A673 (cell line): ENCODE measurements at regions of chr5 and their contacts with region 1.

Region 1: DNA sequence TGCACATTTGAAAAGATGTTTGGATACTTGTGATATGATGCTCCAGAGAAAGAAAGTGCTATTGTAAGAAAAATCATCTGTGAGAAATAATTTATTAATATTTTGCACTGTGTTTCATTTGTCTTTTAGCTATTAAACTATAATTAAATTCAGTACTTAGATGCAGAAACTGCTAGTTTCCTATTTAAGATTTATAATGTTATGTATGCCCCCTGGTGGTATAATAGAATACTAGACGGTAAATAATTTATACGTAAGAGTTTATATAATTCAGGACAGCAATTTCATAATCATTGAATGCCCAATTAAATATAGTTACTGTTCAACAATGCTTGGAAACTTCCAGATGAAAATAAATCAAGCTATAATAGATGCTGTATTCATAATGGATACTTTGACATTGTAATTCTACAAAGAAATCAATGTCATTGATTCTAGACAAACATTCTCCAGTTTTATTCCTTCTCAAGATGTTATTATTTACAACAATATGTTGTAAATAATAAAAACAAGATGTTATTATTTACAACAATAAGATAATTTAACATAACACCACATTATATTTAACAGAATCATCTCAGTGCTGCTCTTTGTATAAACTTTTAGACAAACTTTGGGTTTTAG is 101.0 kb downstream of the TMEM232 start:
- DNase-seq: peak; percentile 70
- H3K4me3 ChIP-seq: no peak overlapping the region
- H3K27ac ChIP-seq: no peak overlapping the region
- H3K4me1 ChIP-seq: peaks cover 4% of the 10 kb centered on the region
- H3K27me3 ChIP-seq: no peaks in the 10 kb centered on the region
- CTCF ChIP-seq: peak; percentile 64

Region 2: GRCh38 chr5:108642167-108642906 is 1983.2 kb before region 1 on chr5:
- CTCF ChIA-PET with region 1: interaction called, 3 read pairs
- POLR2A ChIA-PET with region 1: no interaction called
- intact Hi-C with region 1: loop called (anchors 10 kb)
- DNase-seq: peak; percentile 92
- H3K4me3 ChIP-seq: no peak overlapping the region
- H3K27ac ChIP-seq: peak overlapping the region; percentile 43
- H3K4me1 ChIP-seq: peaks cover 26% of the 10 kb centered on the region
- H3K27me3 ChIP-seq: no peaks in the 10 kb centered on the region
- CTCF ChIP-seq: peak; percentile 92

Region 3: DNA sequence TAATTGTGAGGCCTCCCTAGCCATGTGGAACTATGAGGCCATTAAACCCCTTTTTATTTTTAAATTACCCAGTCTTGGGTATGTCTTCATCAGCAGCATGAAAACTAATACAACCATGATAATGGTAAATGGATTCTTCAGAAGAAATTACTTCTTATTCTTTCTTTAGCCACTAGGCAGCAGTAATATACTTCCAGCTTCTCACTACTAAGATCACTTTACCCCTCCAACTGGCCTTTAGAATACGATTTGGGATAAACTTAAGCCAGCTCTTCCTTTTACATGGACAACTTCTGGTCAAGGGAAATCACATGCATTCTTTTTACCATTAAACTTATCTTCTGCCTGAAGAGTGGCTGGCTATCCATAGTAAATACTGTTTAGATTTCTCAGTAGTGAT is 580.3 kb before region 1 on chr5:
- CTCF ChIA-PET with region 1: no interaction called
- POLR2A ChIA-PET with region 1: no interaction called
- intact Hi-C with region 1: loop called (anchors 10 kb)
- DNase-seq: peak; percentile 29
- H3K4me3 ChIP-seq: no peak overlapping the region
- H3K27ac ChIP-seq: no peak overlapping the region
- H3K4me1 ChIP-seq: peaks cover 6% of the 10 kb centered on the region
- H3K27me3 ChIP-seq: no peaks in the 10 kb centered on the region
- CTCF ChIP-seq: peak; percentile 39

Region 4: GRCh38 chr5:110441035-110441434 is 184.5 kb before region 1 on chr5:
- CTCF ChIA-PET with region 1: interaction called, 4 read pairs
- POLR2A ChIA-PET with region 1: no interaction called
- intact Hi-C with region 1: loop called (anchors 1 kb)
- DNase-seq: peak; percentile 55
- H3K4me3 ChIP-seq: no peak overlapping the region
- H3K27ac ChIP-seq: no peak overlapping the region
- H3K4me1 ChIP-seq: no peaks in the 10 kb centered on the region
- H3K27me3 ChIP-seq: no peaks in the 10 kb centered on the region
- CTCF ChIP-seq: peak; percentile 63

Region 5: DNA sequence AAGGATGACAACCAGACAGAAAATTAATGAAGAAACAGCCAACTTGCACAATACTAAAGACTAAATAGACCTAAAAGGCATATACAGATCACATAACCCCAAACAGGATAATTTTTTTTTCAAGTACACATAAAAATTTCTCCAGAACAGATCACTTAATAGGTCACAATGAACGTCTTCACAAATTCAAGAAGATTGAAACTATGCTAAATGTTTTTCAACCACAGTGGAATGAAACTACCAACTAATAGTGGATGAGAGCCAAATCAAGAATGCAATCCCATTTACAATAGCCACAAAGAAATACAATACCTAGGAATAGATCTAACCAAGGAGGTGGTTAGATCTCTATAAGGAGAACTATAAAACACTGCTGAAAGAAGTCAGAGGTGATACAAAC is 44.9 kb before region 1 on chr5:
- CTCF ChIA-PET with region 1: no interaction called
- POLR2A ChIA-PET with region 1: no interaction called
- intact Hi-C with region 1: no loop called
- DNase-seq: no peak
- H3K4me3 ChIP-seq: no peak overlapping the region
- H3K27ac ChIP-seq: no peak overlapping the region
- H3K4me1 ChIP-seq: no peaks in the 10 kb centered on the region
- H3K27me3 ChIP-seq: no peaks in the 10 kb centered on the region
- CTCF ChIP-seq: no peak